AG04450 (cell line): ENCODE measurements at regions of chr9 and their contacts with region 1.

Region 1: DNA sequence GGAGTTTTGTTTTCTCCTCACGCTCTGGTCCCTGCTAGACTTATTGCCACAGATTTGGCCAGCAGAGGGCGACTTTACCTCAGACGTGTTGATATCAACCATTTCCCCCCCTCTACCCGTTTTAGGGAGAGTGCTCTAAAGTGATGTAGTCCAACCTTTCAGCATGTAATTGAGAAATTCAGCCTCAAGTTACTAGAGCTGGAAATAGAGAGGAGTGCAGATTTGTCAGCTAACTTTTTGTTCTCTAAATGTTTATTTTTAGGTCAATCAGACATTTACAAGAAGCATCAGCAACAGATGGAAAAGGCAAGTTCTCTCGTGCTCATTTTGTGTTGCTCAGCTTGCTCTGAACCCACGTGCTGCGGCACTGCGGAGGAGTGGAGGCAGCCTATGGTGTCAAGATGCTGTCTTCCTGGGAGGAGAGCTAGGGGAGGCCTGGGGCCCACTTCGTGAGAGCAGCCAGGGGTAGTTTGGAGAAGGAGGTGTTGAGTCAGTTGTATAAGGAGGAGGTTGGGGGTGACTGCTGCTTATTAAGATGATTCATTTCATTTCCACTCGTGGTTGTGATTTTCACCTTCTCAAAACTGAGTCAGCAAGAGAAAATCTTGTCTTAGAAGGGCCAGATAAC is 53.6 kb downstream of the GPR107 start:
- DNase-seq: peak; percentile 74
- H3K4me3 ChIP-seq: no peak overlapping the region
- H3K27ac ChIP-seq: peak overlapping the region; percentile 35
- H3K27me3 ChIP-seq: no peaks in the 10 kb centered on the region
- CTCF ChIP-seq: peak; percentile 84

Region 2: GRCh38 chr9:130118841-130119518 is 11.6 kb after region 1 on chr9:
- CTCF ChIA-PET with region 1: interaction called, 22 read pairs
- POLR2A ChIA-PET with region 1: no interaction called
- DNase-seq: no peak
- H3K4me3 ChIP-seq: no peak overlapping the region
- H3K27ac ChIP-seq: no peak overlapping the region
- H3K27me3 ChIP-seq: no peaks in the 10 kb centered on the region
- CTCF ChIP-seq: no peak

Region 3: GRCh38 chr9:130220352-130220751 is 113.0 kb after region 1 on chr9:
- CTCF ChIA-PET with region 1: interaction called, 11 read pairs
- POLR2A ChIA-PET with region 1: no interaction called
- DNase-seq: peak; percentile 46
- H3K4me3 ChIP-seq: no peak overlapping the region
- H3K27ac ChIP-seq: peak overlapping the region; percentile 47
- H3K27me3 ChIP-seq: no peaks in the 10 kb centered on the region
- CTCF ChIP-seq: peak; percentile 61

Region 4: GRCh38 chr9:130343445-130343918 is 236.1 kb after region 1 on chr9:
- CTCF ChIA-PET with region 1: interaction called, 24 read pairs
- POLR2A ChIA-PET with region 1: no interaction called
- DNase-seq: no peak
- H3K4me3 ChIP-seq: no peak overlapping the region
- H3K27ac ChIP-seq: no peak overlapping the region
- H3K27me3 ChIP-seq: peaks cover 11% of the 10 kb centered on the region
- CTCF ChIP-seq: peak; percentile 71